Dorsolateral prefrontal cortex (tissue), 120 donors: ENCODE measurements at regions of chr4 and their contacts with region 1.

Region 1: DNA sequence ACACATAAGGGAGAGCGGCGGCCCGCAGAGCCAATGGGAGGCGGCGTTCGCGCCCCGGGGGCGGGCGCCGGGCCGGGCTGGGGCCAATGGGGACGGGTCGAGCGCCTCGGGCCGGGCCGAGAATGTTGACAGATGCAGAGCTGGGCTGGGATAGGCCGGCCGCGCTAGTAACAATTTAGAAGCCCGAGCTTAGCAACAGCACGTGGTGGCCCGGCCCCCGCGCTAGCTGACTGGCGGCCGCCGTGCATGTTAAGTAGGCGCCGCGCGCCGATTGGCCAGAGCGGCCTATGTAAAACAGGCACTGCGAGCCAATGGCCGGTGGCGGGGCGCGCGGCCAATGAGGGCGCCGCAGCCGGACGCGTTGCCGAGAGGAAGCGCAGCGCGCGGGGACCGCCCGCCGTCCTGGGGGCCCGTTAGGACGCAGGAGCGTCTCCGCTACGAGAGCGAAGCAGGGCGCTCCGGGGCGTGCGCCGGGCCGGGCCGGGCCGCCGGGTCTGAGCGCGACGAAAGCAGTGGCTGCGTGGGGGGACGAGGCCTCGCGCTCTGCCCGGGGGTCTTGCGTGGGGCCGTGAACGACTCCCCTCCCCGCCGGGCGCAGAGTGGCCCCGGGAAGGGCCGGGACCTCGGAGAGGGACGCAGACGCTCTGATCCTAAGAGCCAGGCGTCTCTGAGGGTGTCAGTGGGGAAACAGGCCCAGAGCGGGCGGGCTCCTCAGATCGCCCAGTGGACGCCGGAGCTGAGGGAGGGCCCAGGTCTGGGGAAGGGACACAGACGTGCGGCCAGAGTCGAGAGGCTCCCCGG is 434 bp upstream of the MXD4 start:
- DNase-seq: peak; percentile 100
- H3K4me3 ChIP-seq: peak overlapping the region; percentile 53 to 98 (median 84)
- H3K27ac ChIP-seq: peak overlapping the region; percentile 37 to 99 (median 93)
- H3K27me3 ChIP-seq: no peaks in the 10 kb centered on the region
- CTCF ChIP-seq: peak in 39 of 56 donors; percentile 5 to 61 (median 29)

Region 2: GRCh38 chr4:2008875-2009703 is 253.3 kb before region 1 on chr4 and contains the start of gene NELFA:
- intact Hi-C with region 1: loop called in 1 of 2 experiments (anchors 5 kb)
- DNase-seq: peak; percentile 94 to 97 (median 96)
- H3K4me3 ChIP-seq: peak within 1 kb of the TSS; percentile 61 to 99 (median 95)
- H3K27ac ChIP-seq: peak within 1 kb of the TSS; percentile 92 to 100 (median 99)
- H3K27me3 ChIP-seq: no peaks in the 10 kb centered on the region
- CTCF ChIP-seq: peak in 53 of 56 donors; percentile 20 to 89 (median 63)
- total RNA-seq, gene NELFA: 31.6 to 76.1 (median 48.7) TPM

Region 3: DNA sequence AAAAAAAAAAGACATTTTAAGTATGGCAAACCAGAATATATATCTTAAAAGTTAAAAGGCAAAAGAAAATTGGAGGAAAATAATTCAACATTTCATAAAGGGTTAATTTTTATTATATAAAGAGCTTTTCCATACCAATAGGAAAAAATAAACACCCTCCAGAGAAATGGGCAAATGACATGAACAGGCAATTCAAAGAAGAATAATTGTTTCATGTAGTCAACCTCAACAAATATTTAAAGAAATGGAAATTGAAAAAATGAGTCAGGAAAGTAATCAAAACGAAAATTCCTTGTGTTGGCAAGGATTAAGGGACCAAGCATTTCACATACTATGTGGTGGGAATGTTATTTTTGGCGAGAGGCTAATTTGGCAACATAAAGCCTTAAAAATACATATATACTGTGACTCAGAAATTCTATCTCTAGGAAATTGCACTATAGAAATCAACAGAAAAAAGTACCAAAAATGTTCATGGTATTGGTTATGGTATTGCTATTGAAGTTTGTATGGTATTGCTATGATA is 108.1 kb before region 1 on chr4:
- intact Hi-C with region 1: no loop called
- DNase-seq: no peak
- H3K4me3 ChIP-seq: no peak overlapping the region
- H3K27ac ChIP-seq: no peak overlapping the region
- H3K27me3 ChIP-seq: no peaks in the 10 kb centered on the region
- CTCF ChIP-seq: no peak

Region 4: DNA sequence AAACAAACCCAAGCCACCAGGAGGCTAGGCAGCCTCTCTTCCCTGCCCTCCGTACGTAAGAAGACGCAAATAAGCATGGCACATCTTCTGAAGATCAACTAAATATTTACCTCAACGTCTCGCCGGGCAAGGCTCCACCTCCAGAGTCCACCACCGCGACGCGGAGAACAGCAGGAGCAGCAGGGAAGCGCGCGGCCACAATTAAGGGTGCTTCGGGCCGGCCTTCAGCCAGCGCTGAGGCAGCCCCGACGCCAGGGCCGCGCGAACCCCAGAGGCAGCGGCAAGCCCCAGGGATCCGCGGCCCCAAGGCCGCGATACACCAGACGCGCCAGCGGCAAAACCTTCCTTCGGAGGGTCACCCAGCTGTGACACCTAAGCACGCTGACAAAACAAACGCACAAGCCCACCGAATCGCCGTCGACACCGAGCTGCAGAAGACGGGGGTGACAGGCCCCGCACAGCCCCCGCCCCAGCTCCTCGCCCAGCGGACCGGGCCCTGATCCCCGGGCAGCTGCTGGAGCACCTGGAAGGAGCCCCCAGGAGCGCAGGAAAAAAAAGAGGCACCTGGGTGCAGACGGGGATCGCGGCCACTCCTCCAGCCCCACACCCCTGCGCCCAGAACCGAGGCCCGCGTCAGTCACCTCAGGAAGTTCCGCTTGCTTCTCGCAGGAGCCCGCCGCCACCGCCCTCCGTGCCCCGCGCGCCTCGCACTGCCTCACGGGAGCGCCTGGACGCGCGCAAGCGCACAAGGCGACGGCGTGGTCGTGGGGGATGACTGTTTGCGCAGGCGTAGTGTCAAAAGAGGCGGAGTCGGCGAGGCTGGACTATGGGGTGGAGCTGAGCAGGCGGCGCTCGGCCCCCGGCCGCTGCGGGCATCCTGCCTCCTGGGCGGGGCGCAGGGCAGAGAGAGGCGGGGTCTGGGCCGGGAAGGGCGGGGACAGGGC is 20.7 kb before region 1 on chr4 and contains the starts of genes HAUS3 and POLN:
- intact Hi-C with region 1: loop called (anchors 1 to 2 kb)
- DNase-seq: peak; percentile 93 to 99 (median 96)
- H3K4me3 ChIP-seq: peak within 1 kb of the TSS; percentile 64 to 100 (median 96)
- H3K27ac ChIP-seq: peak within 1 kb of the TSS in 53 of 59 donors; percentile 2 to 89 (median 71)
- H3K27me3 ChIP-seq: no peaks in the 10 kb centered on the region
- CTCF ChIP-seq: peak in 22 of 56 donors; percentile 11 to 57 (median 40)
- total RNA-seq, gene HAUS3: 13.0 to 29.2 (median 19.3) TPM
- total RNA-seq, gene POLN: 9.4 to 50.0 (median 23.7) TPM

Region 5: GRCh38 chr4:2418650-2419571 is 156.6 kb after region 1 on chr4 and contains the start of gene CFAP99:
- intact Hi-C with region 1: loop called (anchors 2 to 5 kb)
- DNase-seq: peak; percentile 95 to 99 (median 97)
- H3K4me3 ChIP-seq: peak within 1 kb of the TSS; percentile 54 to 95 (median 77)
- H3K27ac ChIP-seq: peak within 1 kb of the TSS in 48 of 59 donors; percentile 12 to 92 (median 72)
- H3K27me3 ChIP-seq: peaks cover 0 to 4% (median 0%) of the 10 kb centered on the region in 45 donors
- CTCF ChIP-seq: peak in 44 of 56 donors; percentile 5 to 64 (median 39)
- total RNA-seq, gene CFAP99: 0.28 to 3.7 (median 1.4) TPM

Region 6: GRCh38 chr4:2462218-2462991 is 200.1 kb after region 1 on chr4:
- intact Hi-C with region 1: loop called (anchors 5 to 10 kb)
- DNase-seq: peak; percentile 32 to 83 (median 66)
- H3K4me3 ChIP-seq: peak overlapping the region; percentile 43 to 77 (median 63)
- H3K27ac ChIP-seq: peak overlapping the region in 53 of 59 donors; percentile 2 to 87 (median 68)
- H3K27me3 ChIP-seq: no peaks in the 10 kb centered on the region
- CTCF ChIP-seq: peak in 54 of 56 donors; percentile 12 to 87 (median 62)

Region 7: GRCh38 chr4:2468445-2469192 is 206.3 kb after region 1 on chr4 and contains the start of gene RNF4:
- intact Hi-C with region 1: loop called (anchors 5 to 10 kb)
- DNase-seq: peak; percentile 86 to 97 (median 96)
- H3K4me3 ChIP-seq: peak within 1 kb of the TSS; percentile 71 to 100 (median 96)
- H3K27ac ChIP-seq: peak within 1 kb of the TSS; percentile 62 to 99 (median 93)
- H3K27me3 ChIP-seq: no peaks in the 10 kb centered on the region
- CTCF ChIP-seq: peak in 23 of 56 donors; percentile 2 to 56 (median 23)
- total RNA-seq, gene RNF4: 40.7 to 76.3 (median 56.4) TPM